Left ventricle myocardium inferior (tissue), 1 donor: ENCODE measurements at regions of chr1 and their contacts with region 1.

Region 1: GRCh38 chr1:158666037-158666436 is 20.5 kb downstream of the SPTA1 start:
- DNase-seq: no peak
- H3K4me3 ChIP-seq: no peak overlapping the region
- H3K27ac ChIP-seq: no peak overlapping the region
- H3K4me1 ChIP-seq: no peaks in the 10 kb centered on the region
- H3K27me3 ChIP-seq: no peaks in the 10 kb centered on the region
- CTCF ChIP-seq: no peak

Region 2: GRCh38 chr1:158752155-158752712 is 86.2 kb after region 1 on chr1:
- intact Hi-C with region 1: loop called (anchors 10 kb)
- DNase-seq: no peak
- H3K4me3 ChIP-seq: no peak overlapping the region
- H3K27ac ChIP-seq: no peak overlapping the region
- H3K4me1 ChIP-seq: no peaks in the 10 kb centered on the region
- H3K27me3 ChIP-seq: no peaks in the 10 kb centered on the region
- CTCF ChIP-seq: no peak